Right ventricle myocardium inferior (tissue), 1 donor: ENCODE measurements at regions of chr17 and their contacts with region 1.

Region 1: DNA sequence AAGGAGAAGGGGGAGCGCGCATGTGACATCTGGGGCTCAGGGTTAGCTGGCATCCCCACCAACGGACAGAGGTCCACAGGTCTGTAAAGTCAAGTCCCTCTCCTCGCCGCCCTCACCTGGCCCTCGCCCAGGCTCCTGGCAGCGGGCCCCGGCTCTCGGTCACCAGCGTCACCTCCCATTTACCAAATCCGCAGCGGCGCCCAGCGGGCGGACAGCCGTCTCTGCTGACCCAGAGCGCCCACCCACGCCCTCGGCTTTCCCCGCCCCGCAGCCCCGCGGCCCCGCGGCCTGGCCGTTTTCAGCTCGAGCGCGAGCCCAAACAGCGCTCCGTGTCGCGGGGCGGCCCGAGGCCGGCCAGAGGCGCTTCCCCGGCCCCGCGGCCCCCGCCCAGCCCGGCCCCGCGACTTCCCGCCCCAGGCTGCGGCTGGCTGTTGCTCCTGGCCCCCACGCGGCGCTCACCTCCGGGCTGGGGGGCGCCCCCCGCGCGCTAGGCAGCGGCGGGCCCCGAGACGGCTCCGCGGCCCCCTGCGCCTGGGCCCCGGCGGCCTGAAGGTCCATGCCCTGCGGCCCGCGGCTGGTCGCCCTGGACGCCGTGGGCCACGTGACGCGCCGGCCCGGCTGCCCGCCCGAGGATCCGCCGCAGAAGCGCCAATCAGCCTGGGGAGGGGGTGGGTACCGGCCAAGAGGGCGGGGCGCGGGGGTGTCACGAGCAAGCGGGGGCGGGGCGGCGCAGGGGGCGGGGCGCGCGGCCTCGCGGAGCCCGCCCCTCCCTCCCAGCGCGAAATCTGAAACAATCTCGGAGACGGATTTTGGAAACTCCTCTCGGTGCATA is at the start of gene COPRS:
- DNase-seq: peak; percentile 96
- ATAC-seq: peak; percentile 93
- total RNA-seq, gene COPRS: 60.0 TPM

Region 2: DNA sequence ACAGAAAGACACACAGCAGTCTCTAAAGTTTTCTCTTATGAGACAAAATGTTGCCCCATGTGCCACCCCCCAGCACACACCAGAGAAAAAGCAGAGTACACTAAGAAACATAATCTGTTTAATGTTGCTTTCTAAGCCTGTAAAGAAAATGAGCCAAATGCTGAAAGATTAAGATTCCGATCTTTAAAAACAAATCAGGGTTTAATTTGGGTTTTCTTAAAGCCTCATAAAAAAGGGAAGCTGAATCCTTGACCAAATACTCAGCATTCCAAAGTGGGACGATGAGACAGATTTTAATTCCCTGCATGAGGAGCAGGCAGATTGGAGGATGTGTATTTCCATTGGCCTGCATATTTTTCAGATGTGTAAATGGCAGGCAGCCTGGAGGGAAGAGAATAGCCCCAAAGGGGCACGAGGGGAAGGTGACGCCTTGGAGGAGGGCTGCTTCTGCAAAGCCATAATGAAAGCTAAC is 118.2 kb before region 1 on chr17:
- intact Hi-C with region 1: no loop called
- DNase-seq: no peak
- ATAC-seq: no peak

Region 3: GRCh38 chr17:31900877-31901276 is 42.0 kb after region 1 on chr17:
- intact Hi-C with region 1: loop called (anchors 2 kb)
- DNase-seq: no peak
- ATAC-seq: no peak

Region 4: GRCh38 chr17:32142038-32142856 is 283.4 kb after region 1 on chr17 and contains the start of gene RHOT1:
- intact Hi-C with region 1: no loop called
- DNase-seq: peak; percentile 89
- ATAC-seq: peak; percentile 76
- total RNA-seq, gene RHOT1: 64.1 TPM